Activated T-helper 2 cell treated with anti-CD3 and anti-CD28 coated beads, Interferon-gamma antibody, Interleukin-2, Interleukin-4, amounts not matched to agents 10 μg/mL and 5 μg/mL and 100 μg/mL, durations not matched to agents 14 hours and 24 hours and 36 hours (primary cell): ENCODE measurements at regions of chr17 and their contacts with region 1.

Region 1: GRCh38 chr17:7856883-7857723 is at the start of gene NAA38:
- DNase-seq: peak; percentile 94
- H3K4me3 Mint-ChIP-seq: no peak within 1 kb of the TSS
- H3K27ac Mint-ChIP-seq: no peak within 1 kb of the TSS
- H3K4me1 Mint-ChIP-seq: peaks cover 20% of the 10 kb centered on the region
- H3K27me3 Mint-ChIP-seq: no peaks in the 10 kb centered on the region
- total RNA-seq, gene NAA38: 52.6 and 53.0 TPM in 2 replicates

Region 2: DNA sequence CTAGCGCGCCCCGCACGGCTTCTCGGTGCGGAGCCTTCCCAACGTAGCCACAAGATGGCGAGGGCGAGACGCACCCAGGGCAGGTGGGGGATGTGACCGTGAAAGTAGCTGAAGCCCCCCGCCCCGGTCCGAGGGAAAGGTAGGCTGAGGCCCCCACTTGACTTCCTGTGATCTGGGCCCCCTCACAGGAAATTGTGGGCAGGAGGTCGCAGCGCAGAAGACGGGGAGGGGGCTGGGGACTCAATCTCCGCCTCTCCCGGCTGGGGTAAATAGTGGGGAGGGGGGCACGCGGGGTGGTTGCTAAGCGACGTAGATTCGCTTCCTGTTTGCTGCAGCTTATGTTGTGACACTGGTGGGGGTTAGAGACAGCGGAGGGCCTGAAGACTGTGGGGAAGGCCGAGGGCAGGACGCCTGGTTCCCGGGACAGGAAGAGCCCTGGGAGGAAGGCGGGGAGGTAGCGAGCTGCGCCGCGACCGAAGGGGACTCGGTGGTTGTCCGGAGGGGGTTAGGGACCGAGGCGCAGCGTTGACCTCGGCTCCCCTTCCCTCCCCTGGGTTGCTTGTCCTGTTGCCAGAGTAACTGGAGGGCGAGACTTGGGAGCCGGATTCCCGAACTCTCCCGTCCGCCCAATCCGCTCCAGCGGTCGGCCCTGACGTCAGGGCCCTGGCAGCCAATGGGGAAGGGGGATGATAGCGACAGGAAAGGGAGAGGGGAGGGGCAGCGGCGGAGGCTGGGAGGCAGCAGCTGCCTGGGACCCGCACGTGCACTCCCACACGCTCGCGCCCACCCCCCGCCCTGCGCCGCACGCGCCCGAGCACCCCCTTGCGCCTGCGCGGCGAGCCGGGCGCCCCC is 21.9 kb before region 1 on chr17:
- intact Hi-C with region 1: loop called (anchors 1 kb)
- DNase-seq: peak; percentile 80
- H3K4me3 Mint-ChIP-seq: peak overlapping the region; percentile 91
- H3K27ac Mint-ChIP-seq: peak overlapping the region; percentile 89
- H3K4me1 Mint-ChIP-seq: peaks cover 42% of the 10 kb centered on the region
- H3K27me3 Mint-ChIP-seq: peaks cover 11% of the 10 kb centered on the region

Region 3: GRCh38 chr17:7887482-7888183 is 30.5 kb after region 1 on chr17:
- intact Hi-C with region 1: loop called (anchors 1 kb)
- DNase-seq: peak; percentile 87
- H3K4me3 Mint-ChIP-seq: no peak overlapping the region
- H3K27ac Mint-ChIP-seq: no peak overlapping the region
- H3K4me1 Mint-ChIP-seq: peaks cover 8% of the 10 kb centered on the region
- H3K27me3 Mint-ChIP-seq: no peaks in the 10 kb centered on the region

Region 4: GRCh38 chr17:7931709-7932482 is 74.8 kb after region 1 on chr17 and contains the starts of genes CNTROB and TRAPPC1:
- intact Hi-C with region 1: loop called (anchors 2 kb)
- DNase-seq: peak; percentile 100
- H3K4me3 Mint-ChIP-seq: peak within 1 kb of the TSS; percentile 97
- H3K27ac Mint-ChIP-seq: peak within 1 kb of the TSS; percentile 99
- H3K4me1 Mint-ChIP-seq: peaks cover 41% of the 10 kb centered on the region
- H3K27me3 Mint-ChIP-seq: no peaks in the 10 kb centered on the region
- total RNA-seq, gene CNTROB: 60.0 and 60.3 TPM in 2 replicates
- total RNA-seq, gene TRAPPC1: 156 and 190 TPM in 2 replicates

Region 5: GRCh38 chr17:8156246-8156992 is 299.3 kb after region 1 on chr17:
- intact Hi-C with region 1: loop called (anchors 1 kb)
- DNase-seq: peak; percentile 100
- H3K4me3 Mint-ChIP-seq: no peak overlapping the region
- H3K27ac Mint-ChIP-seq: no peak overlapping the region
- H3K4me1 Mint-ChIP-seq: peaks cover 49% of the 10 kb centered on the region
- H3K27me3 Mint-ChIP-seq: no peaks in the 10 kb centered on the region